Endothelial cell of umbilical vein (primary cell): ENCODE measurements at regions of chr7 and their contacts with region 1.

Region 1: DNA sequence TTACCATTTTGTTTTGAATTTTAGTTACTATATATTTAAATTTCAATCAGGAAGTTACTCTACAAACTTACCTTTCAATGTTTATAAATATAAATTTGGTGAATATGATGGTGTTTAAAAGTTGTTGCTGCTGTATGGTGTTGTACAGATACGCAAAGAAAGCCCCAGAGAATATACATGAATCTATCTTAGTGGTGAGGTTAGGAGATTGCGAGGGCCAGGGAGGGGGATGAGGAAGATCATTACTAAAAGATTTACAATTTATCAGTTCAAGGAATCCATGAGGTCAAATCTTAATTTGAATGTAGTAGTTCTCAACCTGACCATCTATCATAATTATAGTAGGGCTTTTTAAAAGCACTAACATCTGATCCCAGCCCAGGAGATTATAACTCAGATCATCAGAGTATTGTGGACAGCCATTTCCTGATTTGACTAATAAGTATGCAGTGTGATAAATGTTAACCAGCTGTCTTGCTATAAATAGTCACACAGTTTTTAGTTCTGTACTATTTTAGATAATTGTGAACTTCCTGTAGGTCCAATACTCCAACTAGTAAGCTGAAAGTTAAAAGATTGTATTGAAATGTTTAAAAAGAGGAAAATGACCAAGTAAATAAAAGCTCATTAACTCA is 23.6 kb downstream of the FAM3C start:
- DNase-seq: peak; percentile 67
- H3K4me3 ChIP-seq: no peak overlapping the region
- H3K27ac ChIP-seq: peak overlapping the region; percentile 37
- H3K4me1 ChIP-seq: peaks cover 16% of the 10 kb centered on the region
- H3K27me3 ChIP-seq: no peaks in the 10 kb centered on the region
- CTCF ChIP-seq: no peak
- POLR2A ChIP-seq: no peak

Region 2: DNA sequence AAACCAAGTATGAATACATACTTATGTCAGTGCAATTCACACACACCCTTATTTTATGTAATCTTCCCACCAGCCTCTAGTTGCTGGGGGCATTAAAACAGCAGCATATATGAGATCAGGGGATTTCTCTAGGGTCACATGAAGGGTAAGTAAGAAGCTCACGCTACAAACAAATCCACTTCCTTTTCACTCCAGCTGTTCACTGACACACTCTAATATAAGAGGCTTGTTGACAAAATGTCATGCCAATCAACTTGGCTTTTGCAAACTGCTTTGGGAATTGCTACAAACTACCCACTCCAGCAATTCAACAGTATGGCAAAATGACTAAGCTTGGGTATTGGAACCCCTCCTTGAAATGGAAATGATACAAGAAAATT is 13.3 kb after region 1 on chr7:
- CTCF ChIA-PET with region 1: interaction called, 15 read pairs
- POLR2A ChIA-PET with region 1: interaction called, 5 read pairs
- dilution Hi-C with region 1: no loop called
- intact Hi-C with region 1: loop called (anchors 1 kb)
- DNase-seq: peak; percentile 71
- H3K4me3 ChIP-seq: no peak overlapping the region
- H3K27ac ChIP-seq: no peak overlapping the region
- H3K4me1 ChIP-seq: peaks cover 23% of the 10 kb centered on the region
- H3K27me3 ChIP-seq: no peaks in the 10 kb centered on the region
- CTCF ChIP-seq: no peak
- POLR2A ChIP-seq: no peak

Region 3: GRCh38 chr7:121437456-121438127 is 65.1 kb after region 1 on chr7:
- CTCF ChIA-PET with region 1: interaction called, 4 read pairs
- POLR2A ChIA-PET with region 1: no interaction called
- dilution Hi-C with region 1: no loop called
- intact Hi-C with region 1: loop called (anchors 2 kb)
- DNase-seq: peak; percentile 11
- H3K4me3 ChIP-seq: no peak overlapping the region
- H3K27ac ChIP-seq: no peak overlapping the region
- H3K4me1 ChIP-seq: peaks cover 10% of the 10 kb centered on the region
- H3K27me3 ChIP-seq: no peaks in the 10 kb centered on the region
- CTCF ChIP-seq: no peak
- POLR2A ChIP-seq: no peak

Region 4: GRCh38 chr7:121862591-121862990 is 490.1 kb after region 1 on chr7:
- CTCF ChIA-PET with region 1: no interaction called
- POLR2A ChIA-PET with region 1: no interaction called
- dilution Hi-C with region 1: no loop called
- intact Hi-C with region 1: no loop called
- DNase-seq: no peak
- H3K4me3 ChIP-seq: no peak overlapping the region
- H3K27ac ChIP-seq: no peak overlapping the region
- H3K4me1 ChIP-seq: no peaks in the 10 kb centered on the region
- H3K27me3 ChIP-seq: no peaks in the 10 kb centered on the region
- CTCF ChIP-seq: no peak
- POLR2A ChIP-seq: no peak